ENCODE measurements at regions of chr10 and their contacts with region 1.

Region 1: GRCh38 chr10:15370856-15371701 is at the start of gene FAM171A1:
- DNase-seq: peak; percentile 47 to 88 (median 62)
- ATAC-seq: peak; percentile 79
- H3K4me3 ChIP-seq: peak within 1 kb of the TSS; percentile 43
- H3K4me3 Mint-ChIP-seq: peak within 1 kb of the TSS; percentile 83
- H3K27ac ChIP-seq: no peak within 1 kb of the TSS
- H3K27ac Mint-ChIP-seq: no peak within 1 kb of the TSS
- H3K4me1 ChIP-seq: peaks cover 16% of the 10 kb centered on the region
- H3K4me1 Mint-ChIP-seq: peaks cover 9% of the 10 kb centered on the region
- H3K27me3 ChIP-seq: peaks cover 6 to 11% of the 10 kb centered on the region in 2 experiments
- H3K27me3 Mint-ChIP-seq: peaks cover 10% of the 10 kb centered on the region
- CTCF ChIP-seq: no peak
- total RNA-seq, gene FAM171A1: 1.8 to 2.6 TPM

Region 2: DNA sequence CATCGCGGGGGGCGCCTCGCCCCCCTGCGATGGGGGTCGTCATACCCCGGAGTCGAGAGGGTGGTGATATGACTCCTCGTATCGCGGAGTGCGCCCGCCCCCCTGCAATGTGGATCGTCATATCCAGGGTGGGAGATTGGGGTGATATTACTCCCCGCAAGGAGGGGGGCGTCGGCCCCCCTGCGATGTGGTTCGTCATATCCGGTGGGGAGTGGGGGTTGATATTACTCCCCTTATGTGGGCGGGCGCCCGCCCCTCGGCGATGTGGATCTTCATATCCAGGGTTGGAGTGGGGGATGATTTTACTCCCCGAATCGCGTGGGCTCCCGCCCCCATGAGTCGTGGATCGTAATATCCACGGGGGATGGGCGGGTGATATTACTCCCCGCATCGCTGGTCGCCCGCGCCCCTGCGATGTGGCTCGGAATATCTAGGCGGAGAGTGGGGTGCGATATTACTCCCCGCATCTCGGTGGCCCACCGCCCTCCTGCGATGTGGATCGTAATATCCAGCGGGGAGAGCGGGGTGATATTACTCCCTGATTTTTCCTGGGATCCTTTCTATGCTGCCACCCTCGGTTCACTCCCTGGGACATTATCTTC is 375.0 kb before region 1 on chr10:
- CTCF ChIA-PET with region 1: no interaction called
- POLR2A ChIA-PET with region 1: no interaction called
- intact Hi-C with region 1: loop called in 1 of 2 experiments (anchors 5 kb)
- DNase-seq: no peak
- ATAC-seq: no peak
- H3K4me3 ChIP-seq: no peak overlapping the region
- H3K4me3 Mint-ChIP-seq: no peak overlapping the region
- H3K27ac ChIP-seq: no peak overlapping the region
- H3K27ac Mint-ChIP-seq: no peak overlapping the region
- H3K4me1 ChIP-seq: no peaks in the 10 kb centered on the region
- H3K4me1 Mint-ChIP-seq: peaks cover 8% of the 10 kb centered on the region
- H3K27me3 ChIP-seq: no peaks in the 10 kb centered on the region
- H3K27me3 Mint-ChIP-seq: peaks cover 2% of the 10 kb centered on the region
- CTCF ChIP-seq: no peak

Region 3: GRCh38 chr10:15209827-15210509 is 161.1 kb before region 1 on chr10:
- CTCF ChIA-PET with region 1: no interaction called
- POLR2A ChIA-PET with region 1: no interaction called
- intact Hi-C with region 1: loop called (anchors 5 kb)
- DNase-seq: peak; percentile 65 to 94 (median 78)
- ATAC-seq: peak; percentile 54
- H3K4me3 ChIP-seq: peak overlapping the region; percentile 11
- H3K4me3 Mint-ChIP-seq: peak overlapping the region; percentile 72
- H3K27ac ChIP-seq: no peak overlapping the region
- H3K27ac Mint-ChIP-seq: peak overlapping the region; percentile 98
- H3K4me1 ChIP-seq: peaks cover 56% of the 10 kb centered on the region
- H3K4me1 Mint-ChIP-seq: peaks cover 60% of the 10 kb centered on the region
- H3K27me3 ChIP-seq: no peaks in the 10 kb centered on the region
- H3K27me3 Mint-ChIP-seq: no peaks in the 10 kb centered on the region
- CTCF ChIP-seq: peak; percentile 88